KBM-7 (cell line): ENCODE measurements at regions of chr10 and their contacts with region 1.

Region 1: GRCh38 chr10:28991326-28992270 is 297.3 kb upstream of the LYZL1 start:
- DNase-seq: peak; percentile 63

Region 2: DNA sequence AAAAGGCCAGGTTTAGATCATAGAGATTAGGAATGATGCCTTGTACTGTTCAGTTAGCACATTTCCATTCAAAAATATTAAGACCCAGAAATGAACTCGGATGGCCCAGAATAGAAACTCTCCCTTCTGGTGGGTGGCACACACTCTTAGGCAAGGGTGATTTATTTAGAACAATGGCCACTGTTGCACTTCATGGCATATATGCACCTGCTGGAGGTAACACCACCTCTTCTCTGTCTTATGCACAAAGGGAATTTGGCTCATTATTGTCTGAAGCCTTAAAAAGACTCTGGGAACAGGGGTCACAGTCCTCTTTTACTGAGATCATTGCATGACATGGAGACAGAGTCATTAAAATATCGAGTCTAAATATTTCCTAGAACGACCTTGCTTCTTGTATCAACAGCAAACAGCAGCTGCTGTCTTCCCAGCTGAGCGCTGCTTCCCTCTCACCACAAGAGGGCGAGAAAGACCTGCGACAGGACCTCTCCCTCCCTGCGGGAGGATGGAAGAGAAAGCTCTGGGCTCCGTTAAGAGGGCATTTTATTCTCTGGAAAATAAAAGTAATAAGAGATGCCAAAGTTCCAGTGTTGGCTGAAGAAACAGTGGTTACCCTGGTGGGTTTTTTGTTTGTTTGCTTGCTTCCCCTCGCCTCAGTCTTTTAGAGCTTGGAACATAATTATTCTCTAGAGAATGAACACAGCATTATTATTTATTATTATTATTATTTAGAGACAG is 327.9 kb before region 1 on chr10:
- in situ Hi-C with region 1: loop called (anchors 25 kb)
- DNase-seq: peak; percentile 77